ENCODE measurements at regions of chr15 and their contacts with region 1.

Region 1: DNA sequence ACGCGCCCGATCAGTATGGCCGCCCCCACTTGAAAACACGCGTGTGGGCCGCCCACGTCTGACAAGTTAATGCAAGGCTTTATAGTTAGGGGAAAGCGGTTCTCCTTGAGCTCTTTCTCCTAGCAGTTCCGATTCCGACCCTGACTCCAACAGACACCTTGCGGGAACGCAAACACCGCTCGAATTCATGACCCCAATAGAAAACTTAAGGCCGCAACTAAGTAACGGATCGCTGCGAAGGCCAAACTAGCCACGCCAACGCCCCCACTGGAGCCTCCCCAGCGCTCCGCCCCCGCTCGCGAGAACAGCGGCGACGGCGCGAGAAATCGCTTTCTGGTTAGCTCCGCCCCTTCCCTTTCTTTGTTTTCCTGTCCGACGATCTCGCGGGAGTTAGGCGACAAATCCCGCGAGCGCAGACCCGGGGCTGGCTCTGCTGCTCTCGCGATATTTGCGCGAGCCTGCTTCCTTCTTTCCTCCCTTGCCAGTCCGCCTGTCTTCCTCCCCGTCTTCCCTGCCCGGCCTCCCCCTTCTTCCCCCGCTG is at the start of gene IREB2:
- DNase-seq: peak; percentile 99
- ATAC-seq: peak; percentile 88
- H3K4me3 Mint-ChIP-seq: peak within 1 kb of the TSS; percentile 87
- H3K27ac Mint-ChIP-seq: peak within 1 kb of the TSS; percentile 99
- H3K4me1 Mint-ChIP-seq: peaks cover 35% of the 10 kb centered on the region
- H3K27me3 Mint-ChIP-seq: no peaks in the 10 kb centered on the region
- total RNA-seq, gene IREB2: 50.8 to 66.5 TPM

Region 2: GRCh38 chr15:78077058-78077877 is 360.6 kb before region 1 on chr15 and contains the start of gene TBC1D2B:
- CTCF ChIA-PET with region 1: no interaction called
- POLR2A ChIA-PET with region 1: no interaction called
- intact Hi-C with region 1: loop called in 1 of 2 experiments (anchors 2 kb)
- DNase-seq: peak; percentile 86
- ATAC-seq: peak; percentile 76
- H3K4me3 Mint-ChIP-seq: peak within 1 kb of the TSS; percentile 95
- H3K27ac Mint-ChIP-seq: peak within 1 kb of the TSS; percentile 93
- H3K4me1 Mint-ChIP-seq: peaks cover 44% of the 10 kb centered on the region
- H3K27me3 Mint-ChIP-seq: no peaks in the 10 kb centered on the region
- total RNA-seq, gene TBC1D2B: 49.3 to 52.0 TPM

Region 3: GRCh38 chr15:78264304-78265136 is 173.3 kb before region 1 on chr15 and contains the start of gene DNAJA4:
- CTCF ChIA-PET with region 1: interaction called, 4 read pairs
- POLR2A ChIA-PET with region 1: interaction called, 3 read pairs
- intact Hi-C with region 1: loop called in 1 of 2 experiments (anchors 1 kb)
- DNase-seq: peak; percentile 74
- ATAC-seq: peak; percentile 66
- H3K4me3 Mint-ChIP-seq: peak within 1 kb of the TSS; percentile 83
- H3K27ac Mint-ChIP-seq: peak within 1 kb of the TSS; percentile 86
- H3K4me1 Mint-ChIP-seq: peaks cover 29% of the 10 kb centered on the region
- H3K27me3 Mint-ChIP-seq: no peaks in the 10 kb centered on the region
- total RNA-seq, gene DNAJA4: 38.6 to 41.5 TPM

Region 4: GRCh38 chr15:78329625-78330024 is 108.2 kb before region 1 on chr15:
- CTCF ChIA-PET with region 1: no interaction called
- POLR2A ChIA-PET with region 1: no interaction called
- intact Hi-C with region 1: no loop called
- DNase-seq: peak; percentile 19
- ATAC-seq: peak; percentile 71
- H3K4me3 Mint-ChIP-seq: no peak overlapping the region
- H3K27ac Mint-ChIP-seq: no peak overlapping the region
- H3K4me1 Mint-ChIP-seq: no peaks in the 10 kb centered on the region
- H3K27me3 Mint-ChIP-seq: no peaks in the 10 kb centered on the region

Region 5: DNA sequence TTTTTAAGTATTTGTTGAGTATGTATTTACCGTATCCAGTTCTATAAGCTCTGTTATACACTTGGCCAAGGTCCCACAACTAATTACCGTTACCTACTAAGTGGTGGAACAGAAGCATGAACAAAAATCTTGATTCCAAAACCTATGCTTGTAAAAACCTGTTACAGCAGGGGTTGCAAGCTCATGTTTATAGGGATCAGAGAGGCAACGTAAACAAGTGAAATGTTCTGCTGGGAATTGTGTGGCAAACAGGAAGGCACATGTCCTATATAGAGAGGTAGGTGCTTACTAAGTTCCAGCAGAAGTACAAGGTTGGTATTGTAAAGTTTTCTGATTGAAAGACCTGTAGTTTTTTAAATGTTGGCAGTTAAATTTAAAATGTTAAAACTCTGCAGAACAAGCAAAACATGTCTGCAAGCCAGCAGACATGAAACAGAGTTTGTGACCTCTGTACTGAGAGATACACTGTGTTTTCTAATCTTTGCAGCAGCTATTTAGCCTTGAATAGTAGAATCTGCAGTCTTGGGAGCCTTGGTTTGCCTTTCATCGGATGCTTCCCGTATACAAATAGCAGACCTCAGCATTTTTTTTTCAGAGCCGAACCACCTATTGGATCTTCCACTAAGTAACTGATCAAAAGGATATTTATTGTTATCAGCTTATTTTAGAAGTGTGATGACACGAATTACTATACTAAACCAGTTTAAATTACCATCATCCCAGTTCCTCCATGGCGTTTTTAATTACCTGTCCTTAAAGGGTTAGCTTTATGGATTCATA is 11.6 kb after region 1 on chr15:
- CTCF ChIA-PET with region 1: interaction called, 15 read pairs
- POLR2A ChIA-PET with region 1: interaction called, 4 read pairs
- intact Hi-C with region 1: no loop called
- DNase-seq: no peak
- ATAC-seq: no peak
- H3K4me3 Mint-ChIP-seq: no peak overlapping the region
- H3K27ac Mint-ChIP-seq: no peak overlapping the region
- H3K4me1 Mint-ChIP-seq: peaks cover 61% of the 10 kb centered on the region
- H3K27me3 Mint-ChIP-seq: no peaks in the 10 kb centered on the region

Region 6: DNA sequence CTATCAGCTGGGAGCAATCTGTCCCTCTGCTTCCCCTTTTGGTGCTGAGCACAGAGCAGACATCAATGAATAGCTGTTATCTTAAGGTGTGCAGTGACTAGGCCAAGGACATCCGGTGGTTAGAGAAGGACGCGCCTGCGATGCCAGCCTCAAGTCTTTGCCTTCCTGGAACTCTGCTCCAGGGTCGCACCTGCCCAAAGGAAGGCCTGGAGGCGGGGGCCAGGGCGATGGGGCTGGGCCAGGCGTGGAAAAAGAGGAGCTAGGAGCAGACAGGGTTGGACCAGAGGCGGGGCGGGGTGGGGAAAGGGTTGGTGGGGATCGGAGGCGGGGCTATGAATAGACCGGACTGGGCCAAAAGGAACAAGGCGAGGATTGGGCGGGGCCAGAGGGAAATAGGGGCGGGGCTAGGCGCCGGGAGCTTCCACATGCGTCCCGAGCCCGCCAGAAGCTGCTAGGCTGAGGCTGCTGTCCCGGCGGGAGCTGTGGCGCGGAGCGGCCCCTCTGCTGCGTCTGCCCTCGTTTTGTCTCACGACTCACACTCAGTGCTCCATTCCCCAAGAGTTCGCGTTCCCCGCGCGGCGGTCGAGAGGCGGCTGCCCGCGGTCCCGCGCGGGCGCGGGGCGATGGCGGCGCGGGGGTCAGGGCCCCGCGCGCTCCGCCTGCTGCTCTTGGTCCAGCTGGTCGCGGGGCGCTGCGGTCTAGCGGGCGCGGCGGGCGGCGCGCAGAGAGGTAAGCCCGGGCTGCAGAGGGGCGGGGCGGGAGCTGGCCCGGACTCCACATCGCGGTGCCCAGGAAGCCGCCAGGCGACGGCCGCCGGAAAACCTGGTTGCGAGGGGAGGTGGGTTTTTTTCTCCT is 127.5 kb after region 1 on chr15 and contains the start of gene CHRNA5:
- CTCF ChIA-PET with region 1: no interaction called
- POLR2A ChIA-PET with region 1: interaction called, 3 read pairs
- intact Hi-C with region 1: loop called in 1 of 2 experiments (anchors 1 kb)
- DNase-seq: peak; percentile 88
- ATAC-seq: peak; percentile 91
- H3K4me3 Mint-ChIP-seq: peak within 1 kb of the TSS; percentile 77
- H3K27ac Mint-ChIP-seq: peak within 1 kb of the TSS; percentile 24
- H3K4me1 Mint-ChIP-seq: peaks cover 26% of the 10 kb centered on the region
- H3K27me3 Mint-ChIP-seq: peaks cover 15% of the 10 kb centered on the region
- total RNA-seq, gene CHRNA5: 6.5 to 8.5 TPM

Region 7: GRCh38 chr15:78822514-78822913 is 384.7 kb after region 1 on chr15:
- CTCF ChIA-PET with region 1: no interaction called
- POLR2A ChIA-PET with region 1: no interaction called
- intact Hi-C with region 1: no loop called
- DNase-seq: no peak
- ATAC-seq: no peak
- H3K4me3 Mint-ChIP-seq: no peak overlapping the region
- H3K27ac Mint-ChIP-seq: no peak overlapping the region
- H3K4me1 Mint-ChIP-seq: no peaks in the 10 kb centered on the region
- H3K27me3 Mint-ChIP-seq: peaks cover 5% of the 10 kb centered on the region

Region 8: GRCh38 chr15:79310983-79311900 is 873.4 kb after region 1 on chr15 and contains the start of gene TMED3:
- CTCF ChIA-PET with region 1: no interaction called
- POLR2A ChIA-PET with region 1: no interaction called
- intact Hi-C with region 1: loop called in 1 of 2 experiments (anchors 5 kb)
- DNase-seq: peak; percentile 90
- ATAC-seq: peak; percentile 98
- H3K4me3 Mint-ChIP-seq: peak within 1 kb of the TSS; percentile 81
- H3K27ac Mint-ChIP-seq: peak within 1 kb of the TSS; percentile 77
- H3K4me1 Mint-ChIP-seq: peaks cover 28% of the 10 kb centered on the region
- H3K27me3 Mint-ChIP-seq: peaks cover 23% of the 10 kb centered on the region
- total RNA-seq, gene TMED3: 33.5 to 37.2 TPM